K562 (cell line): ENCODE measurements at regions of chr19 and their contacts with region 1.

Region 1: DNA sequence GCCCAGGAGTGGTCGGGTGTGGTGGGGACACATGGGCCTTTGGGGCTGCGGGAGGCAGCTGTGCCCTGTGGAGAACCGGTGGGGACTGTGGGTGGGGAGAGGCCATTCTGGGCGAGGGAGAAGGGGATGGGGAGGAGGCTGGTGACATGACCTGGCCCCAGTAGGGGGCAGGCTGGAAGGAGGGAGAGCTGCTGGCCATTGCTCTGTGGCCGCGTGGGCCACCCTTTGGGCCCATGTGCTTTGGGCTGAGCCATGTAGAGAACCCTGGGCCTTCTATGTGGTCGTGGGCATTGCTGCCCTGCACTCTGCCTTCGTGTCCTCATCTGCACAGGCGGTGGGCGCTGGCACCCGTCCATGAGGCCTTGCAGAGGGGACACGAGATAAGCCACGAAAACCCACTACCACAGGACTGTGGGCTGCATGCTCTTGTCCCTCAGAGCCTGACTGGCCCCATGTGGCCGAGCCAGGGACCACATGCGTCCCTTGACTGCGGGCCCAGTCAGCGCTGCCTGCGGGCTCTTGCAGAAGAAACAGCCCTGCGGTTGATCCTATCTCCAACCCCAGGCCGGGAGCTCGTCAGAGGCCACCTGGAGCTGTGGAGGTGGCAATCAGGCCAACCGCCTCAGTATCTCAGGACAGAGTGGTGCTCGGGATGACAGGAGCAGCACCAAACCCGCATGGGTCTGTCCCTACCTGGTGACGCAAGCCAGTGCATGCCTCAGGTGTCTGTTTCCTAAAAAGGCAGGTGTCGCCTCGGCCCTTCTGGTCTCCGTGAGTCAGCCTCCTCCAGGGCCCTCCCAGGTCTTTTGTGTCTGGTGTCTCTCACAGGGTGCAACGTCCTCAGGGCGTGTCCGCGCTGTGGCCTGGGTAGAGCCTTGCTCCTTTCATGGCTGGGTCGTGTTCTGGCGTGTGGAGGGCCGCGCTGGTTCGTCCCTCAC is 14.3 kb downstream of the FZR1 start:
- DNase-seq: peak; percentile 86 to 94 (median 90)
- ATAC-seq: peak; percentile 97
- H3K4me3 ChIP-seq: no peak overlapping the region
- H3K27ac ChIP-seq: peak overlapping the region; percentile 86
- H3K4me1 ChIP-seq: peaks cover 19 to 76% of the 10 kb centered on the region in 2 experiments
- H3K27me3 ChIP-seq: no peaks in the 10 kb centered on the region
- CTCF ChIP-seq: peak; percentile 70 to 81 (median 72)
- EP300 ChIP-seq: peak; percentile 74
- POLR2A ChIP-seq: no peak
- RAD21 ChIP-seq: peak; percentile 57 to 76

Region 2: GRCh38 chr19:3284759-3285646 is 235.4 kb before region 1 on chr19:
- CTCF ChIA-PET with region 1: no interaction called
- POLR2A ChIA-PET with region 1: no interaction called
- in situ Hi-C with region 1: no loop called
- intact Hi-C with region 1: no loop called
- DNase-seq: peak; percentile 89 to 99 (median 93)
- ATAC-seq: peak; percentile 94
- H3K4me3 ChIP-seq: peak overlapping the region; percentile 43
- H3K27ac ChIP-seq: peak overlapping the region; percentile 85
- H3K4me1 ChIP-seq: peaks cover 12 to 33% of the 10 kb centered on the region in 2 experiments
- H3K27me3 ChIP-seq: peaks cover 11 to 26% of the 10 kb centered on the region in 2 experiments; a peak in 3 of 5 replicates
- CTCF ChIP-seq: no peak
- EP300 ChIP-seq: no peak
- POLR2A ChIP-seq: peak; percentile 78
- RAD21 ChIP-seq: no peak

Region 3: GRCh38 chr19:3505598-3506383 is 14.6 kb before region 1 on chr19 and contains the start of gene FZR1:
- CTCF ChIA-PET with region 1: no interaction called
- POLR2A ChIA-PET with region 1: interaction called, 9 read pairs
- in situ Hi-C with region 1: no loop called
- intact Hi-C with region 1: loop called (anchors 1 kb)
- DNase-seq: peak; percentile 97 to 100 (median 98)
- ATAC-seq: peak; percentile 95
- H3K4me3 ChIP-seq: peak within 1 kb of the TSS; percentile 99
- H3K27ac ChIP-seq: peak within 1 kb of the TSS; percentile 92
- H3K4me1 ChIP-seq: peaks cover 27 to 68% of the 10 kb centered on the region in 2 experiments; a peak in 4 of 5 replicates
- H3K27me3 ChIP-seq: no peaks in the 10 kb centered on the region
- CTCF ChIP-seq: peak; percentile 1 to 16 (median 9); a peak in 1 of 6 replicates
- EP300 ChIP-seq: peak; percentile 31; the same call in 1 of the 2 replicates
- POLR2A ChIP-seq: peak; percentile 80
- RAD21 ChIP-seq: no peak
- polyA plus RNA-seq, gene FZR1: 0.18 to 0.28 TPM

Region 4: DNA sequence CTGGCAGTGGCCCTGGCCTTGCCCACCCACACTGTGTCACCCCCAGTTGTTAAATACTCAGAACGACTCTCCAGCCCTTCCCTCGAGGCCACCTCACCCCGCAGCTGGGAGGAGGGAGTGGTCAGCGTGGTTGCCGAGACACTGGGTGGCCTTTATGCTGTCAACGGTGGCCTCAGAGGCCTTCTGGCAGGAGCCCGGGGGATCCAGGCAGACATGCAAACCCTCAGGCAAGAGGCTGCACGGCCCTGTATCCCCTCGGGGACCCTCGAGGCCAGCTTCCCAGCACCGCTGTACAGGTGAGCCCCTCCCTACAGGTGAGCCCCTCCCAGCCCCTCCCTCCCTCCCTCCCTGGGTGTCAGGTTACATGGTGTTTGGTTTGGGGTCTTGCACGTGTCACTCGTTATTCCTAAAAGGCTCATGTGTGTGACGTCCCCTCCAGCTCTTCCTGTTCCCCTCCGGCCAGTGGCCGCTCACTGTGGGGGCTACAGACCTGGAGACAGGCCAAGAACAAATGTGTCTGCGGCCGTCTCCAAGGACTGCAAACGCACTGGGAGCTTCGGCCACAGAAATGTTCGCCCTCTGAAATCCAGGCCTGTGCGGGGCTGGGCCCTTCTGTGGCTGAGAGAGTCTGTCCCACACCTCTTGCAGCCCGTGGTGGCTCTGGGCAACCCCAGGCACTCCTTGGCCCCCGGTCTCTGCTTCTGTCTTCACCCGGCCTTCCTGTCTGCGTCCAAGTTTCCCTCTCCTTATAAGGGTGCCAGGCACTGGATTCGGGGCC is 18.7 kb after region 1 on chr19 and contains the start of gene TEKTIP1:
- CTCF ChIA-PET with region 1: interaction called, 3 read pairs
- POLR2A ChIA-PET with region 1: interaction called, 15 read pairs
- in situ Hi-C with region 1: no loop called
- intact Hi-C with region 1: no loop called
- DNase-seq: peak; percentile 56 to 66 (median 58)
- ATAC-seq: peak; percentile 76
- H3K4me3 ChIP-seq: no peak within 1 kb of the TSS
- H3K27ac ChIP-seq: peak within 1 kb of the TSS; percentile 10; the same call in 2 of the 3 replicates
- H3K4me1 ChIP-seq: peaks cover 7 to 53% of the 10 kb centered on the region in 2 experiments; a peak in 3 of 5 replicates
- H3K27me3 ChIP-seq: no peaks in the 10 kb centered on the region
- CTCF ChIP-seq: no peak
- EP300 ChIP-seq: no peak
- POLR2A ChIP-seq: peak; percentile 36
- RAD21 ChIP-seq: no peak
- polyA plus RNA-seq, gene TEKTIP1: not detected

Region 5: DNA sequence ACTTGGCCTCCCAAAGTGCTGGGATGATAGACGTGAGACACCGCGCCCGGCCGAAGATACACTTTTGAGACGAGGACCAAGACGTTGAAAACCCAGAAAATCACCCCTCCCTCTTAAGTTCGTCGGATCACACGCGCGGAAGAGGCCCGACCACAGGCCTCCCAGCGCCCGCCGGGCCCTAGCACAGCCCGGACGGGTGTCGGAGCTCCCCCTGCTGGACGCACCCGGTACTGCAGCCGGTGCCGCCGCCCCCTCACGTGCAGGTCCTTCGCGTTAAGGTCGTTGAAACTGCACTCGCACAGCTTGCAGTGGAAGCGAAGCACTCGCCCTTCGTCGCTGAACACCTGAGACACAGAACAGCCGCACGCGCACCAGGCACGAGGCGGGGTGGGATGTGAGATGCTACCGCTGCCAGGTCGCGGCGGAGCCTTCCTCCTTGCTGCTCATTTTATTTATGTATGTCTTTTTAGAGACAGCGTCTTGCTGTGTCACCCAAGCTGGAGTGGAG is 301.5 kb after region 1 on chr19:
- CTCF ChIA-PET with region 1: no interaction called
- POLR2A ChIA-PET with region 1: no interaction called
- in situ Hi-C with region 1: no loop called
- intact Hi-C with region 1: no loop called
- DNase-seq: peak; percentile 82 to 93 (median 90)
- ATAC-seq: peak; percentile 95
- H3K4me3 ChIP-seq: no peak overlapping the region
- H3K27ac ChIP-seq: no peak overlapping the region
- H3K4me1 ChIP-seq: peaks cover 5 to 61% of the 10 kb centered on the region in 2 experiments; a peak in 4 of 5 replicates
- H3K27me3 ChIP-seq: no peaks in the 10 kb centered on the region
- CTCF ChIP-seq: peak; percentile 91 to 99 (median 95)
- EP300 ChIP-seq: no peak; the same call in 1 of the 2 replicates
- POLR2A ChIP-seq: no peak
- RAD21 ChIP-seq: peak; percentile 76 to 87

Region 6: DNA sequence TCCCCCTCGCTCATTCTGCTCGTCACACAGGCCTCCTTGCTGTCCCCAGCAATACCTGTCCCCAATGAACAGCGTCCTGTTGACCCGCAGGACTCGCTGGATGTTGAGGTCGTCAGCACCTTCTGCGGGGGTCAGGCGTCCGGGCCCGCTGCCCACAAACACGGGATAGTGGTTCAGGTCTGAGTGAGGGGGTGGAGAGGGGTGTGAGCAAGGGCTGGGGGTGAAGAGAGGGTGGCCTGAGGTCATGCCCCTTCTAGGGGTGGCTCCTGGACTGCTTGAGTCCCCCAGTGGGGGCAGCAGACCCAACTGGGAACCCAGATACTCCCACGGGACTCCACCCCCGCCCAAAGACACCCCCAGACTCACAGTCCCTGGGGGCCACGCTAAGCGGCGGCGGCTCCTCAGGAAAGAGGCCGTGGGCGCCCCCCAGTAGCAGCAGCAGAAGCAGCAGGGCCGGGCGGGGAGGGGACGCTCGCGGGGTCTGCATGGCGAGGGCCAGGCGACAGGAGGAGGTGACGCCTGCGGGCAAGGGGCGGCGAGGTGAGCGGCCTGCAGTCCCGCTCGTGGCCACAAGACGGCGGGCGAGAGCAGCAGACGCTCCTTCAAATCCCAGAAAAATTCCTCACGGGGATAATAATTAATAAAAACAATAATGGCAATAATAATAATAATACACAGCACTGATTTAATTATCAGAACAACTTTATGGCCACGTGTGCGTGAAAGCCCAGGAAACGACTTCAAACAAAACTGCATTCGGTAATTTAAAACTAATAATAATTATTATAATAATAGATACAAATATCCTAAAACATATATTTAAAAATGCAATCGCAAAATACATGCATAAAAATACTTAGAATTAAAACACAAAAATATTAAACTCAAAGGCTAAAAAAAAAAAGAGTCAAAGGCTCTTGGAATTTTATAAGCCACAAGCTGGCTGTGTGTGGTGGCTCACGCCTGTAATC is 1037.8 kb after region 1 on chr19:
- CTCF ChIA-PET with region 1: no interaction called
- POLR2A ChIA-PET with region 1: no interaction called
- in situ Hi-C with region 1: no loop called
- intact Hi-C with region 1: no loop called
- DNase-seq: peak in 2 of 4 experiments; percentile 52 to 63
- ATAC-seq: no peak
- H3K4me3 ChIP-seq: 0 out of 2 replicates have a peak overlapping the region, but pooled peaks have one; percentile 8
- H3K27ac ChIP-seq: no peak overlapping the region
- H3K4me1 ChIP-seq: peaks cover 11 to 43% of the 10 kb centered on the region in 2 experiments
- H3K27me3 ChIP-seq: no peaks in the 10 kb centered on the region
- CTCF ChIP-seq: peak; percentile 84 to 93 (median 92)
- EP300 ChIP-seq: no peak
- POLR2A ChIP-seq: no peak
- RAD21 ChIP-seq: peak; percentile 34 to 51